A673 (cell line): ENCODE measurements at regions of chr19 and their contacts with region 1.

Region 1: GRCh38 chr19:56252699-56253422 is 19.7 kb upstream of the EDDM13 start:
- DNase-seq: peak; percentile 90
- H3K4me3 ChIP-seq: no peak overlapping the region
- H3K27ac ChIP-seq: no peak overlapping the region
- H3K4me1 ChIP-seq: no peaks in the 10 kb centered on the region
- H3K27me3 ChIP-seq: no peaks in the 10 kb centered on the region
- CTCF ChIP-seq: peak; percentile 92

Region 2: DNA sequence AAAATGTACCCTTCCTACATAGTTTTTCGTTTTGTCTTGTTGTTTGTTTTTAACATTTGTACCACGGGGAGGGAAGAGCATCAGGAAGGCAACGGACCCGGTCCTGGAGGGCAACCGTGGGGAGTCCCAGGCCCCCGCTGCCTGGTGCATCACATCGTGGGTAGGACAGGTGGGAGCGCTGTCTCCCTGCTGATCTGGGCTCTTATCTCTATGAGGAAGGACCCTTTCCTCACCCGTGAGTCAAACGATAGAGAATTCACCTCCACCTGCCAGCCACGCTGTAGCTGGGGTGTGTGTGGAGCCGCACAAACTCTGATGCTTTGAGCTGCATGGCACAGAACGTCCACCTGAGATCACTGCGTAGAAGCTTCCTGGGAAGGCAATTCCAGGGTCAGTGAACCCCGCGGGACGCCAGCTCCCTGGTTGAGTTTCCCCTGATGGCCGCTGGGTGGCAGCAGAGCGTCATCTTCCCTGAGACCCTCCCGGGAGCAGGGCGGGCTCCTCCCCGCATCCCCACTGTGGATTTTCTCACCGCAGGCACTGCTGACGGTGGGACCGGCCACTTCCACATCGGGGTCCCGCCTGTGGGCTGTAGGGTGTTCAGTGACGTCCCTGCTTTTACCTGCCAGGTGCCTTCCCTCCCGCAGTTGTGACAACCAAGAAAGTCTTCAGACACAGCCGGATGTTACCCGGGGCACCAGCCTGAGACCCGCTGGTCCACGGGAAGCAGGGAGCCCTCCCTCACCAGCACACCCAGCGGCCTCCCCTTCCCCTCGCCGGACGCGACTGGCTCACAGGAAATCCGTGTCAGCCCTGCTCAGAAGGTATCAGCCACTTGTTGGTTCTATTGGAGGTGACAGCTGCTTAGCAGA is 186.5 kb before region 1 on chr19:
- CTCF ChIA-PET with region 1: interaction called, 27 read pairs
- POLR2A ChIA-PET with region 1: no interaction called
- intact Hi-C with region 1: loop called (anchors 2 kb)
- DNase-seq: peak; percentile 71
- H3K4me3 ChIP-seq: no peak overlapping the region
- H3K27ac ChIP-seq: no peak overlapping the region
- H3K4me1 ChIP-seq: no peaks in the 10 kb centered on the region
- H3K27me3 ChIP-seq: peaks cover 17% of the 10 kb centered on the region
- CTCF ChIP-seq: peak; percentile 91

Region 3: DNA sequence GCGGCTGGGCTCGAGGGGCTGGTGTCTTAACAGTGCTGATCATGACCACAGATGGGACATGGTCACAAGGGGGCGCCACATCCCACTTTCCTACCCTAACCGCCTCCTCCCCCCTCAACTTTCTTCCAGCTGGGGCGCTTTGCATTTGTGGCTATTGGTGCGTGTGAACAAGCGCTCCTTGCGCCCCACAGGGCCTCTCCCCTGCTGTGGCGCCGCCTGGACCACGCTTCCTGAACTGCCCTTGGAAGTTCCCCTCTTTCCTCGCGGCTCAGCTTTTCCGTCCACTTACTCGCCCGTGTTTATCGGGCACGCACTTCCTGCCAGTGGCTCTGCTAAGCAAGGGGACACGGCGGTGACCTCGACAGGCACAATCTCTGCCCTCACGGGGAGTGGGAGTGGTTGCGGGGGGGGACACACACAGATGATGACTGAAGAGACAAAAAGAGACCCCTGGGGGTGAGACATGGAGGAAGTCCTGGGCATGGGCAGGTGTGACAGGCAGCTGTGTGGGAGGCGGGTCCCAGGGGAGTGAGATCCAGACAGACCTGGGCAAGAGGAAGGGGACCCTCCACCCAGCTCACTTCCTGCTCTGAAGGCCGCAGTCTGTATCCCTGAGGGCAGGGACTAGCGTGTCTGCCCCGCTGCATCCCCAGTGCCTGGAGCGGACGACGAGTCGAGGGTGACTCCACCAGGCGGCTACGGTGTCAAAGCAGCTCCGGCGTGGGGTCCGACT is 172.0 kb before region 1 on chr19:
- CTCF ChIA-PET with region 1: interaction called, 9 read pairs
- POLR2A ChIA-PET with region 1: no interaction called
- intact Hi-C with region 1: loop called (anchors 2 kb)
- DNase-seq: peak; percentile 85
- H3K4me3 ChIP-seq: peak overlapping the region; percentile 43
- H3K27ac ChIP-seq: no peak overlapping the region
- H3K4me1 ChIP-seq: peaks cover 4% of the 10 kb centered on the region
- H3K27me3 ChIP-seq: no peaks in the 10 kb centered on the region
- CTCF ChIP-seq: peak; percentile 67

Region 4: GRCh38 chr19:56314562-56315077 is 61.8 kb after region 1 on chr19 and contains the start of gene ZSCAN5A:
- CTCF ChIA-PET with region 1: interaction called, 18 read pairs
- POLR2A ChIA-PET with region 1: no interaction called
- intact Hi-C with region 1: no loop called
- DNase-seq: peak; percentile 96
- H3K4me3 ChIP-seq: peak within 1 kb of the TSS; percentile 57
- H3K27ac ChIP-seq: peak within 1 kb of the TSS; percentile 97
- H3K4me1 ChIP-seq: peaks cover 6% of the 10 kb centered on the region
- H3K27me3 ChIP-seq: no peaks in the 10 kb centered on the region
- CTCF ChIP-seq: no peak
- total RNA-seq, gene ZSCAN5A: 15.5 and 18.8 TPM in 2 replicates

Region 5: GRCh38 chr19:56333505-56333904 is 80.6 kb after region 1 on chr19:
- CTCF ChIA-PET with region 1: interaction called, 92 read pairs
- POLR2A ChIA-PET with region 1: no interaction called
- intact Hi-C with region 1: loop called (anchors 2 kb)
- DNase-seq: peak; percentile 73
- H3K4me3 ChIP-seq: no peak overlapping the region
- H3K27ac ChIP-seq: no peak overlapping the region
- H3K4me1 ChIP-seq: no peaks in the 10 kb centered on the region
- H3K27me3 ChIP-seq: no peaks in the 10 kb centered on the region
- CTCF ChIP-seq: peak; percentile 80

Region 6: DNA sequence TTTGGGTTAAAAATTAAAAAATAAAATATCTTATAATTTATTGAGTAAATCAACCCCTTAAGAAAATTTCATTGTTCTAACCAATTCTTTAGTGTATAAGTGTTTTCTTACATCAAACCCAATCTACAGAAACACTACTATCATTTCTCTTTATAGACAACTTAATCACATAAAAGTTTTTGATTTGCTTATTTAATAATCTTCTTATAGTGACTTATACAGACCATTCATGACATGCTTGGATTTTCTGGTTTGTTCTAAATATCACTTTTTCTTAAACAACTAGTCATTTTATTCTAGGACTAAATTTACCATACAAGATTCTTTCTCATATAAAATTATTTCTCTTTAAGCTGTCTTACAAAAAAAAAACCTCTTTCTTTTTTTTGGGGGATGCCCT is 89.1 kb after region 1 on chr19:
- CTCF ChIA-PET with region 1: interaction called, 10 read pairs
- POLR2A ChIA-PET with region 1: no interaction called
- intact Hi-C with region 1: no loop called
- DNase-seq: no peak
- H3K4me3 ChIP-seq: no peak overlapping the region
- H3K27ac ChIP-seq: no peak overlapping the region
- H3K4me1 ChIP-seq: no peaks in the 10 kb centered on the region
- H3K27me3 ChIP-seq: no peaks in the 10 kb centered on the region
- CTCF ChIP-seq: no peak